ENCODE measurements at regions of chr9 and their contacts with region 1.

Region 1: GRCh38 chr9:112421771-112422222 is 41.9 kb downstream of the HSDL2 start:
- DNase-seq: peak; percentile 34 to 79 (median 56)
- ATAC-seq: peak; percentile 82
- H3K4me3 ChIP-seq: no peak overlapping the region
- H3K27ac ChIP-seq: peak overlapping the region; percentile 14
- H3K4me1 ChIP-seq: peaks cover 15 to 28% of the 10 kb centered on the region in 2 experiments; a peak in 4 of 5 replicates
- H3K27me3 ChIP-seq: no peaks in the 10 kb centered on the region
- CTCF ChIP-seq: 0 out of 6 replicates have a peak, but pooled peaks of 1 of the 3 experiments have one; percentile 22
- EP300 ChIP-seq: peak; percentile 26; the same call in 1 of the 2 replicates
- POLR2A ChIP-seq: no peak
- RAD21 ChIP-seq: no peak

Region 2: DNA sequence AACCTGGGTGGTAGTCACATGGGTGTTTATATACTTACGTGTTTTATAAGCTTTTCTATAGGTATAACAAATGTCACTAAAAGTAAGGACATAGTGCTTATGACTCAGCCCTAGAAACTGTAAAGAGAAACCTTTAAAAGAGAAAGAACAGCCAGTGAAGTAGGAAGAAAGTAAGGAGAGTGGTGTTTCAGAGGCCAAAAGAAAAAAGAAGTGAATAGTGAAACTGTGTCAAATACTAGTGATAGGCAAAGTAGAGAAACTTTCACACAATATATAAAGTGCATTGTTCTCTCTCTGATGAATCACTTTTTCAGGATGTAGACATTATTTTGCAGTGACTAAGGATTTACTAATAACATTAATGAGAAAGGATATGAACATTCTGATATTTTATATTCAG is 172.5 kb before region 1 on chr9:
- CTCF ChIA-PET with region 1: no interaction called
- POLR2A ChIA-PET with region 1: no interaction called
- in situ Hi-C with region 1: no loop called
- intact Hi-C with region 1: no loop called
- DNase-seq: no peak
- ATAC-seq: no peak
- H3K4me3 ChIP-seq: no peak overlapping the region
- H3K27ac ChIP-seq: no peak overlapping the region
- H3K4me1 ChIP-seq: no peaks in the 10 kb centered on the region
- H3K27me3 ChIP-seq: no peaks in the 10 kb centered on the region
- CTCF ChIP-seq: no peak
- EP300 ChIP-seq: no peak
- POLR2A ChIP-seq: no peak
- RAD21 ChIP-seq: no peak

Region 3: DNA sequence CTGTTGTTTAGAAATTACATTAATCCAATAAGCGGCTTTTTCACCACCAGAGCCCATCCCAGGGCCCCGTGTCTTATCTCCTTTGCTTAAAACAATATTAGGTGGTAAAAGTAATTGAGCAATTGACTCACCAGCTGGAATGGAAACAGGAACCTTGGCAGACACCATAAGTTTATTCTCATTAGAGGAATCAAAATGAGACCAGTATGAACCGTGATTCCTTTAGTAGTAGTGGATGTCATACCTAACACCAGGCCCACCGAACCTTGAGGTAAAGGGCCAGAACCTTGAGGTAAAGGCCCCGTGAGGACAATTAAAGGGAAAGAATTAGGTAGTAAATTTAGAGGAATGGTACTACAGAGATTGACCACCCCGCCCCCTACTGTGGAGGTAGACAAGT is 25.4 kb before region 1 on chr9:
- CTCF ChIA-PET with region 1: no interaction called
- POLR2A ChIA-PET with region 1: no interaction called
- in situ Hi-C with region 1: no loop called
- intact Hi-C with region 1: no loop called
- DNase-seq: no peak
- ATAC-seq: no peak
- H3K4me3 ChIP-seq: no peak overlapping the region
- H3K27ac ChIP-seq: no peak overlapping the region
- H3K4me1 ChIP-seq: no peaks in the 10 kb centered on the region
- H3K27me3 ChIP-seq: no peaks in the 10 kb centered on the region
- CTCF ChIP-seq: no peak
- EP300 ChIP-seq: no peak
- POLR2A ChIP-seq: no peak
- RAD21 ChIP-seq: no peak

Region 4: DNA sequence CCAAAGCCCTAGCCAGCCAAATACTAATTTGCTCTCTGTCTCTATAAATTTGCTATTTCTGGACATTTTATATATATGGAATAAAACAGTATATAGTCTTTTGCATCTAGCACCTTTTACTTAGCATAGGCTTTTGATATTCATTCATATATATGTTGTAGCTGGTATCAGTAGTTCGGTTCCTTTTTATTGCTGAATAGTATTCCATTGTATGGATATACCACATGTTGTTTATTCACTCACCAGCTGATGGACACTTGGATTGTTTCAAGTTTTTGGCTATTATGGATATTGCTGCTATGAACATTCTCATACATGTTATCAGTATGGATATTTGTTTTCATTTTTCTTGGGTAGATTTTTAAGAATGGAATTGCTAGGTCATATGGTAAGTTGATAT is 41.1 kb after region 1 on chr9:
- CTCF ChIA-PET with region 1: no interaction called
- POLR2A ChIA-PET with region 1: interaction called, 5 read pairs
- in situ Hi-C with region 1: no loop called
- intact Hi-C with region 1: loop called (anchors 5 kb)
- DNase-seq: no peak
- ATAC-seq: no peak
- H3K4me3 ChIP-seq: no peak overlapping the region
- H3K27ac ChIP-seq: no peak overlapping the region
- H3K4me1 ChIP-seq: peaks cover 6 to 10% of the 10 kb centered on the region in 2 experiments
- H3K27me3 ChIP-seq: no peaks in the 10 kb centered on the region
- CTCF ChIP-seq: no peak
- EP300 ChIP-seq: no peak
- POLR2A ChIP-seq: no peak
- RAD21 ChIP-seq: no peak

Region 5: GRCh38 chr9:112486221-112487007 is 64.6 kb after region 1 on chr9 and contains the start of gene KIAA1958:
- CTCF ChIA-PET with region 1: no interaction called
- POLR2A ChIA-PET with region 1: no interaction called
- in situ Hi-C with region 1: no loop called
- intact Hi-C with region 1: loop called (anchors 5 kb)
- DNase-seq: peak; percentile 95 to 96 (median 95)
- ATAC-seq: peak; percentile 93
- H3K4me3 ChIP-seq: peak within 1 kb of the TSS; percentile 85
- H3K27ac ChIP-seq: peak within 1 kb of the TSS; percentile 88
- H3K4me1 ChIP-seq: peaks cover 6 to 32% of the 10 kb centered on the region in 2 experiments; a peak in 4 of 5 replicates
- H3K27me3 ChIP-seq: no peaks in the 10 kb centered on the region
- CTCF ChIP-seq: 0 out of 6 replicates have a peak, but pooled peaks of 1 of the 3 experiments have one; percentile 4
- EP300 ChIP-seq: peak; percentile 21; the same call in 1 of the 2 replicates
- POLR2A ChIP-seq: peak; percentile 98
- RAD21 ChIP-seq: peak in 1 of 2 experiments; percentile 20; a peak in 2 of 4 replicates
- polyA plus RNA-seq, gene KIAA1958: 1.1 to 2.6 TPM